ENCODE measurements at regions of chrX and their contacts with region 1.

Region 1: DNA sequence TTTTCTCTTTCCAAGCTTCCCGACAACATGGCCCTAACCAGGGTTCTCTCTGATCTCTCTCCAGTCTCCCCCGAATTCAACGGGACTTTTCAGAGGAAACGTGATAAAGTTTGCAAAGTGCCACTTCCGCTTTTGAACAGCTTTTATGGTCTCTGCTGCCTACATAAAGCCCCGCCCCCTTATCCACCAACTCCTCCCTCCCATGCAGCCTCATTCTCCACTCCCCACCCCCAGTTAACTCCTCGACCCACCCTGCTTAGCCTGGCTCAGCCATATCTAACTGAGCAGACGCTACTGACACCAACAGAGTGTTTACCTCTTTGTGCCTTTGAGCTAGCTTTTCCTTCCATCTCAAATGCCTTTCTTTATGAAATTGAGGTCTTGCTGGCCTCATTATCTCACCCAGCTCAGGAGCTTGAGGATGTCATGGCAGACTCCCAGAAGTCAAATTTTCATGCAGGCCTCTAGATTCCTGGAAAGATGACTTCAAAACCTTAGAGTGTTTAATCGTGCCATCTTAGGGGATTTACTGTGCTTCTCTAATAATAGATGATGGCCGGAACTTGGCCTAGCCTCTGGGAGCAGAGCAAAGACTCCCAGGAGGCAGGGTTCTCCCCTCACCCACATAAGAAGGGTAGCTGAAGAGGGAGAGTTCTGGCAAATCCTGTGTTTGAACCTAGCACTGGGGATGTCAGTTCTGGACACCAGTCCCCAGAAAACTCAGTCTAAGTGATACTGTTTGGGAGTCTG is 606.0 kb downstream of the BCOR start:
- DNase-seq: peak in 8 of 9 donors; percentile 31 to 67 (median 50)
- ATAC-seq: peak; percentile 95
- H3K4me3 ChIP-seq: peak overlapping the region; percentile 27
- H3K4me3 Mint-ChIP-seq: peak overlapping the region; percentile 62 to 77 (median 68)
- H3K27ac ChIP-seq: no peak overlapping the region
- H3K27ac Mint-ChIP-seq: peak overlapping the region in 8 of 9 donors; percentile 60 to 87 (median 77)
- H3K4me1 ChIP-seq: peaks cover 7 to 18% of the 10 kb centered on the region in 2 donors
- H3K4me1 Mint-ChIP-seq: peaks cover 11 to 40% (median 33%) of the 10 kb centered on the region in 7 donors
- H3K27me3 ChIP-seq: no peaks in the 10 kb centered on the region
- H3K27me3 Mint-ChIP-seq: no peaks in the 10 kb centered on the region

Region 2: DNA sequence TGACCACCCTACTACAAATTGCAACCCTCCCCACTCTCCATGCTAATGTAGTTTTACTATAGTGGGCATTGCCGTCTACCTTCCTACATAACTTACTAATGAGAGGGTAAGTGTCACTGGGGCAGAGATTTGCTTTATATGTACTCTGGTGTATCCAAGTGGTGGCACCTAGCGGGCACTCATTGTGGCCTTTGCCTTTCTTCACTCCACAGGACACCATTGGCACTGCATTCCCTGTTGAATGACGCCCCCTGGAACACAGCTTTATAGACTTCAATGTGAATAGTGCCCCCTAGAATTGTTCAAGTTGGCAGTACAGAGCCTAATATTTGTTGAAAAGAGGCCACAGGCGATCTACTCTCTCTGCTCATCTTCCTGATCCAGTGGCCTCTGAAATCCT is 474.6 kb before region 1 on chrX:
- CTCF ChIA-PET with region 1: no interaction called
- POLR2A ChIA-PET with region 1: no interaction called
- intact Hi-C with region 1: no loop called
- DNase-seq: no peak
- ATAC-seq: no peak
- H3K4me3 ChIP-seq: no peak overlapping the region
- H3K4me3 Mint-ChIP-seq: no peak overlapping the region
- H3K27ac ChIP-seq: no peak overlapping the region
- H3K27ac Mint-ChIP-seq: no peak overlapping the region
- H3K4me1 ChIP-seq: no peaks in the 10 kb centered on the region
- H3K4me1 Mint-ChIP-seq: peaks cover 0 to 4% (median 0%) of the 10 kb centered on the region in 7 donors
- H3K27me3 ChIP-seq: no peaks in the 10 kb centered on the region
- H3K27me3 Mint-ChIP-seq: no peaks in the 10 kb centered on the region

Region 3: DNA sequence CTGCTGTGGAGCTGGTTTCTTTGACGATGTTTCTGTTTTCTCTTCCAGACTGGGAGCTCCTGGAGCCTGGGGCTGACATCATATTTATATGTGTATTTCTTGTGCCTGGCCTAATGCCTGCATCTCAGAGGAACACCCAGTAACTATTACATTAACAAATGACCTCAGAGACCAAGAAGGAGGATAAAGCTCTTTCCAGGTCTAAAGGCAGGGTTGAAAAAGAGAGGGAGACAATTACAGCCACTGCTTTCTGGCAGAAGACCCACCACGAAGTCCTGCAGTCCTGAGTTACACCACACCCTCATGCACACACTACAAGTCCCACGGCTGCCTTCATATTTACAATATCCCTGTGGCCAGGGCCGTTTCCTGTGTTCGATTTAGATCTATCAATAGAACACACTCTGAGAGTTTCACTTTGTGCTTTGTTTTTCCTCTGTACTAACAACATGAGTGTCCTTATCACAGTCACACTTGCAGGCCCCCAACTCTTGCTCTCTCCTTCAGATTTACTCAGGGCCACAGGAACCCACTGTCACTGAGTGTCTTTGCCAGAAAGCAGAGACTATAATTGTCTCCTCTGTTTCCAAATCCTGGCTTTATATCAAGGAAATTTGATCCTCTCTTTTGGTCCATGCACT is 154.9 kb before region 1 on chrX:
- CTCF ChIA-PET with region 1: no interaction called
- POLR2A ChIA-PET with region 1: no interaction called
- intact Hi-C with region 1: loop called in 1 of 2 experiments (anchors 10 kb)
- DNase-seq: peak in 2 of 9 donors; percentile 9 to 14
- ATAC-seq: peak; percentile 52
- H3K4me3 ChIP-seq: no peak overlapping the region
- H3K4me3 Mint-ChIP-seq: peak overlapping the region; percentile 51 to 73 (median 66)
- H3K27ac ChIP-seq: peak overlapping the region; percentile 46
- H3K27ac Mint-ChIP-seq: peak overlapping the region; percentile 73 to 97 (median 91)
- H3K4me1 ChIP-seq: peaks cover 16 to 22% of the 10 kb centered on the region in 2 donors
- H3K4me1 Mint-ChIP-seq: peaks cover 11 to 53% (median 38%) of the 10 kb centered on the region in 7 donors
- H3K27me3 ChIP-seq: no peaks in the 10 kb centered on the region
- H3K27me3 Mint-ChIP-seq: no peaks in the 10 kb centered on the region

Region 4: GRCh38 chrX:39427906-39428305 is 63.8 kb before region 1 on chrX:
- CTCF ChIA-PET with region 1: no interaction called
- POLR2A ChIA-PET with region 1: no interaction called
- intact Hi-C with region 1: loop called in 1 of 2 experiments (anchors 10 kb)
- DNase-seq: peak in 1 of 9 donors; percentile 32
- ATAC-seq: no peak
- H3K4me3 ChIP-seq: no peak overlapping the region
- H3K4me3 Mint-ChIP-seq: peak overlapping the region in 4 of 10 donors; percentile 13 to 68 (median 30)
- H3K27ac ChIP-seq: no peak overlapping the region
- H3K27ac Mint-ChIP-seq: peak overlapping the region in 8 of 9 donors; percentile 6 to 87 (median 76)
- H3K4me1 ChIP-seq: peaks cover 0 to 17% of the 10 kb centered on the region in 2 donors
- H3K4me1 Mint-ChIP-seq: peaks cover 11 to 54% (median 32%) of the 10 kb centered on the region in 7 donors
- H3K27me3 ChIP-seq: no peaks in the 10 kb centered on the region
- H3K27me3 Mint-ChIP-seq: no peaks in the 10 kb centered on the region